Endothelial cell of umbilical vein (primary cell): ENCODE measurements at regions of chr3 and their contacts with region 1.

Region 1: GRCh38 chr3:79086514-79086913 is 681.3 kb downstream of the ROBO1 start:
- DNase-seq: peak; percentile 57
- H3K4me3 ChIP-seq: no peak overlapping the region
- H3K27ac ChIP-seq: no peak overlapping the region
- H3K4me1 ChIP-seq: no peaks in the 10 kb centered on the region
- H3K27me3 ChIP-seq: no peaks in the 10 kb centered on the region
- CTCF ChIP-seq: peak; percentile 65 to 71
- POLR2A ChIP-seq: no peak

Region 2: DNA sequence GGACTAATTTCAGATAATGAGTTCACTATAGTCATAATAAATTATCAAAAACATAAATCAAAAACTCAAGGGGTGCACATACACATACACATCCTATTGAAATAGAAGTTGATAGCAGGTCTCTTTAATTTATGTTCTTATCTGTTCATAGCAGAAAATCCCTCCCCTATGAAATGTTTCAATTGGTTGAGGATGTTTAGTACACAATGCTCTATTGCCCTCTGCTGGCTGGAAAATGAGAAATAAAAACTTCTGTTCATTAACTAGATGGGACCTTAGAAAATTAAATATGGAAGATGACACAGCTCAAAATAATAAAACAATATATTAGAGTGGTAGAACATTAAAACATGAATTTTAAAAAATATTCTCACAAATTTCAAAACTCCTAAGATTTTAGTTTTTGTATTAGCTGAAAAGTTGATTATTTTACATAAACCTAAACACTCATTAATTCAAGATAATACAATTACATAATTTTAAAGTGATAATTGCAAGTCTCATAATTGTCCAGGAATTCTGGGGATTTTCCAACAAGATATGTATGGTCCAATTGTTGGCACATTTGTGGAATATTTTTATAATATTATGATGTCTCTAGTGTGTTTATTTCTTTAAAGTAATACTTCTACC is 53.7 kb before region 1 on chr3:
- CTCF ChIA-PET with region 1: interaction called, 15 read pairs
- POLR2A ChIA-PET with region 1: no interaction called
- dilution Hi-C with region 1: no loop called
- intact Hi-C with region 1: no loop called
- DNase-seq: peak; percentile 62
- H3K4me3 ChIP-seq: no peak overlapping the region
- H3K27ac ChIP-seq: no peak overlapping the region
- H3K4me1 ChIP-seq: peaks cover 2% of the 10 kb centered on the region
- H3K27me3 ChIP-seq: no peaks in the 10 kb centered on the region
- CTCF ChIP-seq: peak; percentile 31 to 32
- POLR2A ChIP-seq: no peak

Region 3: GRCh38 chr3:79074558-79074957 is 12.0 kb before region 1 on chr3:
- CTCF ChIA-PET with region 1: interaction called, 19 read pairs
- POLR2A ChIA-PET with region 1: no interaction called
- dilution Hi-C with region 1: no loop called
- intact Hi-C with region 1: no loop called
- DNase-seq: no peak
- H3K4me3 ChIP-seq: no peak overlapping the region
- H3K27ac ChIP-seq: no peak overlapping the region
- H3K4me1 ChIP-seq: no peaks in the 10 kb centered on the region
- H3K27me3 ChIP-seq: no peaks in the 10 kb centered on the region
- CTCF ChIP-seq: no peak
- POLR2A ChIP-seq: no peak

Region 4: DNA sequence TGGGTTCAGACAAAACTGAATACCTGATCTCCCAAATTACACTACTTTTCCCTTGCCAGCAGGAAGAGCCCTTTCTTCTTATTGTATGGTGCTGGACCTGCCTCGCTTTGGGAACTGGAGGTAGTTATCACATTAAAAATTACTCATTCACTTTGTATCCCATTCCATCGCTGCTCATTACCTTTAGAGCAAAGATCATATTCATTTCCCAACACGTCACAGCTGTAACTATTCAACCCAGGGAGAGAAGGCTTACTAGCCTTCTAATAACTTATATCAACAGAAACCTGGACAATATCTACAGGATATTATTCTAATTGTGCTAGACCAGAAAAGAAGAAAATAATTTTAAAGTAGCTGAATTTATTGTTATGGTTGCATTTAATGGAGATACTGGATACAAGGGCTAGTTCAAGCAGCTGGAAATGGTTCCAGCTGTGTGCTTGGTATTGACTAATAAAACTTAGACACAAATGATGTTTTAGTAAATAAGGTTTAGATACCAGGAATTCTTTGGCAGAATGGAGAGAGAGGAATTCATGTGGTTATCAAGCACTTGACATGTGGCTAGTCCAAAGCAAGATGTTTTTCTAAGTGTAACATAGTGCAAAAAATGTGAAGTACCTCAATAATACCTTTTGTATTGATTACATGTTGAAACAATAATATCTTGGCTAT is 25.0 kb after region 1 on chr3:
- CTCF ChIA-PET with region 1: interaction called, 19 read pairs
- POLR2A ChIA-PET with region 1: no interaction called
- dilution Hi-C with region 1: no loop called
- intact Hi-C with region 1: no loop called
- DNase-seq: no peak
- H3K4me3 ChIP-seq: no peak overlapping the region
- H3K27ac ChIP-seq: no peak overlapping the region
- H3K4me1 ChIP-seq: no peaks in the 10 kb centered on the region
- H3K27me3 ChIP-seq: no peaks in the 10 kb centered on the region
- CTCF ChIP-seq: no peak
- POLR2A ChIP-seq: no peak

Region 5: GRCh38 chr3:79369306-79369705 is 282.8 kb after region 1 on chr3:
- CTCF ChIA-PET with region 1: interaction called, 25 read pairs
- POLR2A ChIA-PET with region 1: no interaction called
- dilution Hi-C with region 1: no loop called
- intact Hi-C with region 1: no loop called
- DNase-seq: no peak
- H3K4me3 ChIP-seq: no peak overlapping the region
- H3K27ac ChIP-seq: no peak overlapping the region
- H3K4me1 ChIP-seq: peaks cover 10% of the 10 kb centered on the region
- H3K27me3 ChIP-seq: no peaks in the 10 kb centered on the region
- CTCF ChIP-seq: peak in 1 of 2 donors; percentile 6
- POLR2A ChIP-seq: no peak

Region 6: DNA sequence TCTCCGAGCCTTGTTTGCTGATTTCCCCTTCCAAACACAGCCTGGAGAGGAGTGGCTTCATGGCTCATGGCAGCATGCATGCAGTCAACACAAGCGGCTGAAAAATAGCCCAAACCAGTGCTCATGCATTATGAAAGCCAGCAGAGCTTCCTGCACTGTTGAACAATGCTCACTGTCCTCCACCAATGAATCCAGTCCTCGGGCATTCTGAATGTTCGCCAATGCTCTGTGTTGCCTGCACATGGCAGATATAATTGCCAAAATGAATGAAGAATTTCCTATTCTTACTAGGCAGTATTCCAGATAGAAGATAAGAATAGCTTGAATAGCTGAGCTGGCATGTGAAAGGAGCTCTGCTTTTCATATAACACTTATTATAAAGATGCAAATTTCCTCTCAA is 428.6 kb after region 1 on chr3:
- CTCF ChIA-PET with region 1: interaction called, 96 read pairs
- POLR2A ChIA-PET with region 1: no interaction called
- dilution Hi-C with region 1: no loop called
- intact Hi-C with region 1: loop called (anchors 1 kb)
- DNase-seq: peak; percentile 88
- H3K4me3 ChIP-seq: no peak overlapping the region
- H3K27ac ChIP-seq: no peak overlapping the region
- H3K4me1 ChIP-seq: peaks cover 3% of the 10 kb centered on the region
- H3K27me3 ChIP-seq: no peaks in the 10 kb centered on the region
- CTCF ChIP-seq: no peak
- POLR2A ChIP-seq: no peak